CD8-positive, alpha-beta memory T cell (primary cell): ENCODE measurements at regions of chr5 and their contacts with region 1.

Region 1: DNA sequence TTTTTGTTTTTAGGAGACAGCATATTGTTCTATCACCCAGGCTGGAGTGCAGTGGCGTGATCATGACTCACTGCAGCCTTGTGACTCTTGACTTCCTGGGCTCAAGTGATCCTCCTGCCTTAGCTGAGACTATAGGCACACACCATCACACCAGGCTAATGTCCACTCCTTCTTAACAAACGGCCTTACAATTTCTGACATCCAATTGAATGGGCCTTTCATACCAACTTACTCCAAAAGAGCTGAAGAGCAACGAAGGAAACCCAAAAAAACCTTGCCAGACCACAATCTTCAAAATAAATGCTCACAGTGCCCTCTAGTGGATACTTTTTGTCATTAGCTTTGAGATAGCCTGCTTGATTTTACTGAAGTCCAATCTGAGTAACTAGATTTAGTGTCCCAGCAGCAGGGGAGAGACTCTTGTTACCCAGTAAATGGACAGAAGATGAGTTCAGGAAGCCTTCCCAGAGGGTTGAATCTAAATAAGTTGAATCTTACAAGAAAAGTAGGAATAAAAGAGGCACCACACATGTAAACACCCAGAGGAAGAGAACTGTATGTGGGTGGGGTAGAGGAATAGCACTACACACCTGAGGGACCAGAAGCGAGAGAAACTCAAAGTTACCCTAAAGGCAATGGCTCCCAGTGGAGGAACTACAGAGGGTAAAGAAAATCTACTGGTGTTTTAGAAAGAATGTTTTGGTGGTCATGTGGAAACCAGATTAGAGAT is 9.3 kb downstream of the ZNF622 start:
- DNase-seq: peak; percentile 4 to 59 (median 48)
- H3K4me3 ChIP-seq: no peak overlapping the region
- H3K4me3 Mint-ChIP-seq: peak overlapping the region; percentile 8 to 72 (median 64)
- H3K27ac ChIP-seq: no peak overlapping the region
- H3K27ac Mint-ChIP-seq: peak overlapping the region; percentile 63 to 94 (median 78)
- H3K4me1 ChIP-seq: peaks cover 53% of the 10 kb centered on the region
- H3K4me1 Mint-ChIP-seq: peaks cover 52 to 86% (median 82%) of the 10 kb centered on the region in 3 donors
- H3K27me3 ChIP-seq: no peaks in the 10 kb centered on the region
- H3K27me3 Mint-ChIP-seq: no peaks in the 10 kb centered on the region

Region 2: GRCh38 chr5:16392718-16393117 is 63.5 kb before region 1 on chr5:
- CTCF ChIA-PET with region 1: no interaction called
- POLR2A ChIA-PET with region 1: no interaction called
- DNase-seq: no peak
- H3K4me3 ChIP-seq: no peak overlapping the region
- H3K4me3 Mint-ChIP-seq: no peak overlapping the region
- H3K27ac ChIP-seq: no peak overlapping the region
- H3K27ac Mint-ChIP-seq: no peak overlapping the region
- H3K4me1 ChIP-seq: no peaks in the 10 kb centered on the region
- H3K4me1 Mint-ChIP-seq: no peaks in the 10 kb centered on the region
- H3K27me3 ChIP-seq: no peaks in the 10 kb centered on the region
- H3K27me3 Mint-ChIP-seq: peaks cover 1 to 5% of the 10 kb centered on the region in 2 donors

Region 3: DNA sequence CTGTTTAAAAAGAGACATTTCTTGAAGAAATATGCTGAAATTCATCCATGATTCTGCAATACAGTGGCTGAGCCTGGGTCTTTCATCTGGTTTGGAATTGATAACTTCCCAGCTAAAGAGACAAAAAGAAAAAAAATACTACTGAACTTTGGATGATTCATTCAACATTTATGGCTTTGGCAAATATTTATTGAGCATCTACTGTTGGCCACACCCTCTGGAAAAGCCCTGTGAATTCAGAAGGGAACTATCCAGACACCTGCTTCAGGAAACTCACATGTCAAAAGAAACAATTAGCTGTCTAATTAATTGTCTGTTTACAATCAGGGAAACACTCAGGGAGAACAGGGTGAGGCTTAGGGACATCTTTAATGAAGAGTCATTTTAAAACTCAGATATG is 27.1 kb after region 1 on chr5:
- CTCF ChIA-PET with region 1: interaction called, 12 read pairs
- POLR2A ChIA-PET with region 1: no interaction called
- DNase-seq: no peak
- H3K4me3 ChIP-seq: no peak overlapping the region
- H3K4me3 Mint-ChIP-seq: no peak overlapping the region
- H3K27ac ChIP-seq: no peak overlapping the region
- H3K27ac Mint-ChIP-seq: peak overlapping the region in 1 of 8 donors; percentile 34
- H3K4me1 ChIP-seq: no peaks in the 10 kb centered on the region
- H3K4me1 Mint-ChIP-seq: peaks cover 0 to 12% (median 0%) of the 10 kb centered on the region in 3 donors
- H3K27me3 ChIP-seq: no peaks in the 10 kb centered on the region
- H3K27me3 Mint-ChIP-seq: peaks cover 0 to 1% of the 10 kb centered on the region in 2 donors

Region 4: GRCh38 chr5:16521521-16522483 is 65.5 kb after region 1 on chr5:
- CTCF ChIA-PET with region 1: no interaction called
- POLR2A ChIA-PET with region 1: no interaction called
- DNase-seq: no peak
- H3K4me3 ChIP-seq: no peak overlapping the region
- H3K4me3 Mint-ChIP-seq: no peak overlapping the region
- H3K27ac ChIP-seq: no peak overlapping the region
- H3K27ac Mint-ChIP-seq: peak overlapping the region in 1 of 8 donors; percentile 40
- H3K4me1 ChIP-seq: peaks cover 3% of the 10 kb centered on the region
- H3K4me1 Mint-ChIP-seq: peaks cover 31 to 60% (median 38%) of the 10 kb centered on the region in 3 donors
- H3K27me3 ChIP-seq: no peaks in the 10 kb centered on the region
- H3K27me3 Mint-ChIP-seq: peaks cover 0 to 2% of the 10 kb centered on the region in 2 donors